ENCODE measurements at regions of chr12 and their contacts with region 1.

Region 1: DNA sequence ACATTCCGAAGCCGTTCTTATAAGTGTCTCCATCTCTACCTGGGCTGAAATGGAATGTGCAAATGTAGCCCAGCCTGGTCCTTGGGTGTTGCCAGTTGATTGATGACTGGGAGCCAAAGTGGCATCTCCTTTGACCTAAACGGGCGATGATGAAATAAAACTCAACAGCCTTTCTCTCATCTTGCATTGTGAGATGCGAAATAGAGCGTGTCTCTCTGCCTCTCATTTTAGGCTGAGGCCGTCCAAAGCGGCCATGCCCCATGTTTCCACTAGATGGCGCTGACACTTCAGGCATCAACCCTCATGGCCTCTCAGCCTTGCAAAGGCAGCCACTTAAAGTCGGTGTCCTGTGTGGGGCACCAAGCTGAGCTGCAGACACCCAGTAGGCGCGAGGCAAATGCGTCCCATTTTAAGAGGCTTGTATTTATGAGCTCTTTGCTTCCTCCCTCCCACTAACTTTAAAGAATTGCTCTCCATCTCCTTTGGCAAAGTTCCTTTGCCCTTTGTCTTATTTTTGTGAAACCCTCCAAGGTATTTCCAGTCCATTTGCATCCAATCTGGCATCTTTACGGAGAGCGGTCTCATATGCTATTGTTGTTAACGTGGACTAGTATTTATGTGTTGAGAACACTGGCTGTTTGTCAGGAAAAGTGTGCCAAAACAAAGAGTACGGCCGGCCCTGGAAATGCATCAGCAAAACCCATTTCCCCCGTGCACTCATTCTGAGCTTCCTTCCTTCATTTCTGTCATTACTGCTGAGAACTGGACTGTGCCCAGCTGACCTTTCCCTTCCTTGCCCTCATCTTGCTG is 25.0 kb downstream of the GPRC5A start:
- DNase-seq: no peak
- H3K4me3 ChIP-seq: no peak overlapping the region
- H3K27ac ChIP-seq: peak overlapping the region; percentile 21
- H3K27me3 ChIP-seq: no peaks in the 10 kb centered on the region
- CTCF ChIP-seq: peak; percentile 99

Region 2: DNA sequence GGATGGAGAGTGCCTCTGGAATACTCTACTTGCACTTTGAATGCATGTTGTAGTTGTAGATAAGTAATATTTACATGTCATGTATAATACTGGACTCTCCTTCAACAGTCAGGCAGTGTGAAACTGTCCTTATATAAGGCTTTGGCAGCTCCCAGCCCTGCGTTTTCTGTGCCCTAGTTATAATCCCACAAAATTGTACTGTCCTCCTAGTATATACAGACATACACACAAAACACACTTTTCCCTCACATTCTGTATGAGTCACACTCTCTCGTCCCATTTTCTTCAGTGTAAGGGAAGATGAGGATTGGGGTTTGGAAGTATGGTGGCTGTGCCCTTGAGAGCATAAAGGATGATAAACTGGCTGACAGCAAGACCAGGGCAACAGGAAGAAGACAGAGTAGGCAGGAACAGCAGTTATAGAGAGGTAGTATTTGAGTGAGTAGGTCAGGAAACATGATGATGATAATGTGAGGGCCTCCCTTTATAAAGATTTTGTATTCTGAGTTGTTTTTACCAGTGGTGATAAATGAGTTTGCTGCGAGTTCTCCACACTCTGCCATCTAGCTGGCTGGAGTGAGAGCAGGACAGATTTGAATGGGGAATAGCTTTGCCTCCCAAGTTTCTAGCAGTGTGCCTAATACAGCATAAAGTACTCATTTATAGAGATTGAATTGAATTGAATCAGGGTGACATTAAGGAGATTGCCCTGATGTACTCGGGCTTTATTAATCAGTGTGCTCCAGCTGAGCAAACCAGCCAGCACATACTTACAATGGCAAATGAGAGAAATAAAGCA is 299.6 kb before region 1 on chr12:
- CTCF ChIA-PET with region 1: no interaction called
- POLR2A ChIA-PET with region 1: no interaction called
- DNase-seq: no peak
- H3K4me3 ChIP-seq: no peak overlapping the region
- H3K27ac ChIP-seq: no peak overlapping the region
- H3K27me3 ChIP-seq: no peaks in the 10 kb centered on the region
- CTCF ChIP-seq: no peak

Region 3: DNA sequence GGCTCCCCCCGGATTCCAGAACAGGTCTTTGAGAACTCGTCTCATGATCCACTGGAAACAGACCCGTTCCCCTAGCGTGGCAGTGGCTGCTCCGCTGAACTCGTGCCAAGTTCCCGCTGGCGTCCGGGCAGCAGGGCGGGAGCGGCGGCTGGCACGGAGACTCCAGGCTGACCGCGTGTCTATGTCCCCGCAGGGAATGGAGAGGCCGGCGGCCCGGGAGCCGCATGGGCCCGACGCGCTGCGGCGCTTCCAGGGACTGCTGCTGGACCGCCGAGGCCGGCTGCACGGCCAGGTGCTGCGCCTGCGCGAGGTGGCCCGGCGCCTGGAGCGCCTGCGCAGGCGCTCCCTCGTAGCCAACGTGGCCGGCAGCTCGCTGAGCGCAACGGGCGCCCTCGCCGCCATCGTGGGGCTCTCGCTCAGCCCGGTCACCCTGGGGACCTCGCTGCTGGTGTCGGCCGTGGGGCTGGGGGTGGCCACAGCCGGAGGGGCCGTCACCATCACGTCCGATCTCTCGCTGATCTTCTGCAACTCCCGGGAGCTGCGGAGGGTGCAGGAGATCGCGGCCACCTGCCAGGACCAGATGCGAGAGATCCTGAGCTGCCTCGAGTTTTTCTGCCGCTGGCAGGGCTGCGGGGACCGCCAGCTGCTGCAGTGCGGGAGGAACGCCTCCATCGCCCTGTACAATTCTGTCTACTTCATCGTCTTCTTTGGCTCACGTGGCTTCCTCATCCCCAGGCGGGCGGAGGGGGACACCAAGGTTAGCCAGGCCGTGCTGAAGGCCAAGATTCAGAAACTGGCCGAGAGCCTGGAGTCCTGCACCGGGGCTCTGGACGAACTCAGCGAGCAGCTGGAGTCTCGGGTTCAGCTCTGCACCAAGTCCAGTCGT is 129.4 kb before region 1 on chr12:
- CTCF ChIA-PET with region 1: interaction called, 17 read pairs
- POLR2A ChIA-PET with region 1: no interaction called
- DNase-seq: no peak
- H3K4me3 ChIP-seq: peak overlapping the region; percentile 63
- H3K27ac ChIP-seq: peak overlapping the region; percentile 84
- H3K27me3 ChIP-seq: no peaks in the 10 kb centered on the region
- CTCF ChIP-seq: no peak

Region 4: DNA sequence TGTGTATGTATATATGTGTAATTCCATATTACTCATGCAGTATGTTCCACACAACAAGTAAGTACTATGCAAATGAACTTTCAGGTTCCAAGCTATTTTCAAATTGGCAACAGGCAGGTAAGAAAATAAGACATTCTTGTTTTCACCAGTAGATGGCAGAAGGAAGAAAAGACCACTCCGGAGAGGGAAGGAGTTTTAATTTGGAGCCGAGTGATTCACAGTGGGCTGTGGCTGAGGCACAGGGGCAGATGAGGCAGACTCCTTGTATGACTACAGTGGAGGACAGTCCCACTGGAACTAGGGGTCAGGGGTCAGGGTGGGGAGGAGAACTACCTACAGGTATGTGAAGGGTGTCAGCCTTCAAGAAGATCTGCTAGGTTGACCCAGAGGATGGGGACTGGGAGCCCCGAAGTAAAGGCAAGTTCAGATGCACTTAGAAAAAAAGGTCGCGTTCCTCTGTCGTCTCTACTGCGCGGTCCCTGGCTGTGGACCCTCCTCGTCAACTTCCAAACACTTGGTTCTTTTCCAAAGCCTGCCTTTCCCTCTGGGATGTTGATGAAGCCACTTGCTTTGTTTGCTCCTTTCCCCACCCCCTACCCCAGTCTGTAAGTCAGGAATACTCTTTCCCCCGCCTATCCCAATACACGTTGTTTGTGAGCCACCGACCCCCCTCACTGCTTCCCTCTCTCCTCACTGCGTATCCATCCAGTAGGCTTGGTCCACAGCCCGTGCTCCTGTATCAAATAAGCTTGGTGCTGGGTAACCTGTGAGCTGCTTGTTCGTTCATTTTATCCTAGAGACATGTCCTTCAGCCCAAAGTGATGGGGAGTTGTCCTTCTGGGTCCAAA is 79.1 kb before region 1 on chr12:
- CTCF ChIA-PET with region 1: interaction called, 14 read pairs
- POLR2A ChIA-PET with region 1: no interaction called
- DNase-seq: peak; percentile 44
- H3K4me3 ChIP-seq: no peak overlapping the region
- H3K27ac ChIP-seq: peak overlapping the region; percentile 47
- H3K27me3 ChIP-seq: no peaks in the 10 kb centered on the region
- CTCF ChIP-seq: peak; percentile 66

Region 5: GRCh38 chr12:12927211-12928079 is 11.1 kb after region 1 on chr12:
- CTCF ChIA-PET with region 1: interaction called, 10 read pairs
- POLR2A ChIA-PET with region 1: no interaction called
- DNase-seq: peak; percentile 47
- H3K4me3 ChIP-seq: peak overlapping the region; percentile 61
- H3K27ac ChIP-seq: peak overlapping the region; percentile 31
- H3K27me3 ChIP-seq: no peaks in the 10 kb centered on the region
- CTCF ChIP-seq: no peak

Region 6: DNA sequence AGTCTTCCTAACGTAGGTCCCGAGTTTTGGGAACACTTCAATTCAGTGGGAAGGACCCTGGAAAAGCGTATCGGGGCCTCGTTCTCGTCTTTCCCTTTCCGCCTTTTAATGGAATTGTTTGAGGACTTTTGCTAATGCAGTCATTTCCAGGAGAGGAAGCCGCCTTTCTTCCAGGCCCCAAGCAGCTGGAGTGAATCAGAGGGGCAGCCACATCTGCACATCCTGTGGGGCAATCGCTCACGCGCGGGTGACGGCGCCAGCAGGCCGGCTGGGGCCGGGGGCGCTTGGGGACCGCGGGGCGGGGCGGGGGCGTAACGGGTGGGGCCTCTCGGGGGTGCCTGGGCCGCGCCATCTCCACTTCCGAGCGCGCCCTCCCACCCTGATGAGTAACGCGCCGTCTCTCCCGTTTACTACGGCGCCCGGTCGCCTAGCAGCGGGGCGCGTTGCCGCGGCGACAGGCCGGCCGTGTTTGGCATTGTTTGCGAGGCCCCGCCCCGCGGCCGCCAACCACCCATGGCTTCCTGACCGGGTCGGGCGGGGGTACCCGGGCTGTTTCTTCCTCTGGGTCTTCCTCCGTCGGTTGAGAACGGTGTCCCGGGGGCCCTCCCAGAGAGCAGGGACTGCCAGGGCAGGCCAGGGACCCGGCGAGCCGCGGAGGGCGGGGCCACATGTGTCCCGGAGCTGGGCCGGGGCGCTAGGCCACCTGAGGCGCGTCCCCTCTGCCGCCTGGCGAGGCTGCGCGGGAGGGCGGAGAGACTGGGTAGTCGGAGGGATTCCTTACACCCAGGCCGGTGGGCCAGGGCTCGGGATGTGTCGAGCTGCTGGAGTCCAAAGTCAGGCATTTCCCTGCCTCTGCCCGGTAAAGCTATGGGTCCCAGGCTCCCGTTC is 184.8 kb after region 1 on chr12:
- CTCF ChIA-PET with region 1: interaction called, 13 read pairs
- POLR2A ChIA-PET with region 1: no interaction called
- DNase-seq: peak; percentile 82
- H3K4me3 ChIP-seq: peak overlapping the region; percentile 53
- H3K27ac ChIP-seq: peak overlapping the region; percentile 98
- H3K27me3 ChIP-seq: no peaks in the 10 kb centered on the region
- CTCF ChIP-seq: no peak

Measured in AG04450 (cell line).